IMR-90 (cell line): ENCODE measurements at regions of chr10 and their contacts with region 1.

Region 1: GRCh38 chr10:78015546-78015945 is 13.8 kb downstream of the POLR3A start:
- DNase-seq: no peak
- ATAC-seq: no peak
- H3K4me3 ChIP-seq: no peak overlapping the region
- H3K27ac ChIP-seq: no peak overlapping the region
- H3K4me1 ChIP-seq: no peaks in the 10 kb centered on the region
- H3K27me3 ChIP-seq: no peaks in the 10 kb centered on the region
- CTCF ChIP-seq: no peak
- POLR2A ChIP-seq: no peak
- RAD21 ChIP-seq: no peak

Region 2: DNA sequence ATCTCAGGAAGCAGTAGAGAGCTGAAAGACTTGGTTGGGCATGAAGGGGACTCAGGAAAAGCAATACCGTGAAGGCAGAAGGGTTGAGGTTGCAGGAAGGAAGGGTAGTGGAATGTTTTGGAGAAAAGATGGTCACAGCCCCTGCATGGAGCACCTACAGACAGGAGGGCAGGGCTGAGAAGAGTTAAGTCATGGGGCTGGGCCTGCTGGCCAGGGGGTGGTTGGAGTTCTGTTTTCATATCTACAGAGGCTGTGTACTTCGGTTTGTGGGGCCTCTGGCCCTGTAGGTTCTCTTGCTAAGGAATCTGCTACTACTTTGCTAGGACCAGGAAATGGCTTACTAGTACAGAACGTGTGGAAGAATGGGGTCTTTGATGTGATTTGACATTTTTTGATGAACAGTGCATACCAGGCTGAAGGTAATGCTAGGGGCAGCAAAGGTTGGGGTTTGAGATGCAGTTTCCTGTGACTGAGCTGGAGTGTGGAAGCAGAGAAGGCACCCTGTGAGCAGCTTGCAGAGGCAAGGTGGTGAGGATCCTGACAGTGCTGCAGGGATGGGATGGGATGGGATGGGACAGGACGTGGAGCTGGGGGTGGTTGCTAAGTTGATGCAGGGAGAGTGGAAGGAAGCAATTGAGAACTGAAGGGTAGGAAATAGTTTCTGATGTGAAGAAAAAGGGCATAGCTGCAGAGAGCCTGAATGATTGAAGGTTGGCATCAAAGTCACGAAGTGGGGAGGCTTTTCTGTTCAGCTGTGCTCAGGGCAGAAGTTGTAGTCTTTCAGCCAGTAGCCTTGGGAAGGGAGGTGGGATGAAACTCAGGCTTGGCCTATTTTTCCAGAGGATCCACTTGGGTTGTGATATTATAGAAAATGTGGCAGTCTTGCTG is 25.9 kb after region 1 on chr10:
- CTCF ChIA-PET with region 1: no interaction called
- POLR2A ChIA-PET with region 1: interaction called, 11 read pairs
- dilution Hi-C with region 1: no loop called
- in situ Hi-C with region 1: no loop called
- intact Hi-C with region 1: no loop called
- DNase-seq: no peak
- ATAC-seq: no peak
- H3K4me3 ChIP-seq: no peak overlapping the region
- H3K27ac ChIP-seq: no peak overlapping the region
- H3K4me1 ChIP-seq: peaks cover 12% of the 10 kb centered on the region
- H3K27me3 ChIP-seq: no peaks in the 10 kb centered on the region
- CTCF ChIP-seq: no peak
- POLR2A ChIP-seq: no peak
- RAD21 ChIP-seq: no peak

Region 3: GRCh38 chr10:78211561-78212051 is 196.1 kb after region 1 on chr10:
- CTCF ChIA-PET with region 1: no interaction called
- POLR2A ChIA-PET with region 1: no interaction called
- dilution Hi-C with region 1: no loop called
- in situ Hi-C with region 1: no loop called
- intact Hi-C with region 1: no loop called
- DNase-seq: peak; percentile 67
- ATAC-seq: peak; percentile 77
- H3K4me3 ChIP-seq: no peak overlapping the region
- H3K27ac ChIP-seq: no peak overlapping the region
- H3K4me1 ChIP-seq: peaks cover 12% of the 10 kb centered on the region
- H3K27me3 ChIP-seq: peaks cover 3% of the 10 kb centered on the region; the same call in 1 of the 2 replicates
- CTCF ChIP-seq: peak; percentile 81
- POLR2A ChIP-seq: no peak
- RAD21 ChIP-seq: peak; percentile 90